ENCODE measurements at regions of chr1 and their contacts with region 1.

Region 1: GRCh38 chr1:152047730-152048402 is 11.1 kb upstream of the S100A11 start:
- DNase-seq: peak; percentile 92
- ATAC-seq: peak; percentile 95

Region 2: GRCh38 chr1:151934048-151934493 is 113.8 kb before region 1 on chr1:
- intact Hi-C with region 1: no loop called
- DNase-seq: no peak
- ATAC-seq: peak; percentile 91

Region 3: DNA sequence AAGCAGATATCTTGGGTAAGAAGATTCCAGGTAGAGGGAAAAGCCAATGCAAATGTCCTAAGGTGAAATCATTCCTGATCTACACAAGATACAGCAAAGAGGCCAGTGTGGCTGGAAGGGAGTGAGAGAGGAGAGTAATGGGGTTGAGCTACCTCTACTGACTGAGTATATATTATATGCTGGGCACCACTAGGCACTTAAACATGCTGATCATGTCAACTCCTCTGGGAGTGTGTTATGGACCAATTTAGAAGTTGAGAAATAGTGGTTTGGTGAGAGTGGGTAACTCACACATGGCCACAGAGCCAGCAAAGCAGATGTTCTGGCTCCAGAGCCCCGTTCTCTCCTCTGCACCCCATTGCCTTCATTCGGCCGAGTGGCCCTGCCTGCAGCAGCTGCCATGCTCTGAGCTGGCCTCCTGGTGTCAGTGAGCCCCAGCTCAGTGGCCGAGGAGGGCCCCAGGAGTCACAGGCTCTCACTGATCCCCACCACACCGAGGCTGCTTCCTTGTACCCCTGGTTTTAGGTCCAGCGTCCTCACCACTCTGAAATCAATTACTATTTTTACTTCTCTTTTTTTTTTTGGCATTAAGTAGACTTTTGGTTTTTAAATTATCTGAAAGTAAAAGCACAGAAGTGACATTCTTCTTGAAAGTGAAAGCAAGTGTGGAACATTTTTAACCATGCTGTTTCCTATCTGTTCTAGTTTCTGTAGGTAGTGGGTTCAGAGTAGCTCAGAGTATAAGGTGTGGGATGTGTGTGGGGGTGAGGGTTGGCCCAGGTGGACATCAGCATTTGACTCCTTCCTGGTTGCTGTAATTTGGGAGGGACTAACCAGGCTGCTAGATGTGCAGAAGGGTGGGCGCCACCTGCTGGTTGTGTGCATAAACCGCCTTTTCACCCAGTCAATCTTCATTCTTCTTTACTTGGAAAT is 412.0 kb after region 1 on chr1:
- intact Hi-C with region 1: loop called (anchors 5 kb)
- DNase-seq: peak; percentile 78
- ATAC-seq: peak; percentile 63